ENCODE measurements at regions of chr6 and their contacts with region 1.

Region 1: DNA sequence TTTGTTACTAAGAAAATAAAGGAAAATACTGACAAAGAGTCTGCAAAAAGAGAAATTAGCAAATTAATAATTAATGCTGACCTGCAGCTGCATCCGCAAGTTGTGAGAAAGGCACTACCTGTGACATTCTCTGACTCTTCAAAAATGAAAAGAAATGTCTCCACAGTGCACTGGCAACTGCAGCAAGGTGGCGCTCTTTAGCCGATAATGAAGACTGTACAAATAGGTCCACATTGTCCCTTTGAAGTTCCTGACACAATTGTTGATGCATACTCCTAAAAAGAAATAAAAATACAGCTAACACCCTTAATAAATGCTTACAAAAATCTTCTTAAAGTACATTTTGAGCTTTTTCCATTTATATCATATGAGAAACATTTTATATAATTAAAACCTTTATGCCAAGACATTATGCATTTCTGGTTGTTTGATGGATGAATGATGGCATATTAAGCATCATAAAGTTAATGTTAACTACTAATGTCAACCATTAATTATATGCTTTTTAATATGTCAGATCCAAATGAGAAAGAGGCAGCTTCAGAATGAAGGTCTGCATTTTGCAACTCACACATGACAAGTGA is 96.5 kb downstream of the MMS22L start:
- DNase-seq: peak; percentile 38 to 77 (median 48)
- ATAC-seq: peak; percentile 96
- H3K4me3 ChIP-seq: no peak overlapping the region
- H3K27ac ChIP-seq: no peak overlapping the region
- H3K4me1 ChIP-seq: no peaks in the 10 kb centered on the region
- H3K27me3 ChIP-seq: no peaks in the 10 kb centered on the region
- CTCF ChIP-seq: peak; percentile 68 to 88 (median 83)
- EP300 ChIP-seq: no peak
- POLR2A ChIP-seq: no peak
- RAD21 ChIP-seq: peak; percentile 76 to 79

Region 2: DNA sequence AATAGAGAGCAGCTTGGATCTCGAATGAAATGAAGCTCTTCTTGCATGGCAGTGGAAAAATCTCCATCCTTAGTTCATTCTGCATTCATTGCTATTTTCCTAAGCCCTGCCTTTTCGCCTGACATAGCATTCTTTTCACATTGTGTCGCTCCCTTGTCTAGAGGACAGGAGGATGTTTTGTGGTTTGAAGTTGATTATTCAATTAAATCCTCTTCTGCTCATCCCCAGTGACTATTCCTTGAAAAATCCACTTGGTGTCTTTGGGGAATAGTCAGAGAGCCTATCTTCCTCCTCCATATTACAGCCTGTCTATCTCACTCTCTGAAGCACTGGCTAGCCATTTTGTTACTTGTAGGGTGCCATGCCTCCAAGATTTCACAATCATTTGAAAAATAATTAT is 100.7 kb before region 1 on chr6:
- CTCF ChIA-PET with region 1: no interaction called
- POLR2A ChIA-PET with region 1: no interaction called
- in situ Hi-C with region 1: no loop called
- intact Hi-C with region 1: no loop called
- DNase-seq: no peak
- ATAC-seq: no peak
- H3K4me3 ChIP-seq: no peak overlapping the region
- H3K27ac ChIP-seq: no peak overlapping the region
- H3K4me1 ChIP-seq: no peaks in the 10 kb centered on the region
- H3K27me3 ChIP-seq: peaks cover 0 to 6% of the 10 kb centered on the region in 2 experiments; a peak in 1 of 5 replicates
- CTCF ChIP-seq: no peak
- EP300 ChIP-seq: no peak
- POLR2A ChIP-seq: no peak
- RAD21 ChIP-seq: no peak

Region 3: DNA sequence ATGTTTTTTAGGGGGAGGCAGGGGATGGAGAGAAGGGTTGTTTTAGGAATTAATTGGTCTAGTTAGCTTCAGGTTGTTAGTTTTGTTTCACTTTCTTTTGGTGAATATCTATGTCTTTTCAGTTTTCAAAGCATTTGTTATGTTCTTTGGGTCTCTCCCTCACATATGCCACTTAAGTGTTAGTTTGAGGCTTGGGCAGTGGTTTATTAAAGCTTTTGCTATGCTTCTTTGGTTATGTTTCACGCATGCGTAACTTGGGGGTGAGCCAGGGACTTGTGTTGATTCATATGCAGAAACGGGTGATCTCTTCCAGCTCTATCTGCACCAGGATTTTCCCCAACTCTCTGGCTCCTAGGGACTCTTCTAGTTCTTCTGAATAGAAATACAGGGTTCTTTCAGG is 107.9 kb after region 1 on chr6:
- CTCF ChIA-PET with region 1: no interaction called
- POLR2A ChIA-PET with region 1: no interaction called
- in situ Hi-C with region 1: no loop called
- intact Hi-C with region 1: no loop called
- DNase-seq: no peak
- ATAC-seq: no peak
- H3K4me3 ChIP-seq: no peak overlapping the region
- H3K27ac ChIP-seq: no peak overlapping the region
- H3K4me1 ChIP-seq: no peaks in the 10 kb centered on the region
- H3K27me3 ChIP-seq: no peaks in the 10 kb centered on the region; a peak in 3 of 5 replicates
- CTCF ChIP-seq: no peak
- EP300 ChIP-seq: no peak
- POLR2A ChIP-seq: no peak
- RAD21 ChIP-seq: no peak

Region 4: DNA sequence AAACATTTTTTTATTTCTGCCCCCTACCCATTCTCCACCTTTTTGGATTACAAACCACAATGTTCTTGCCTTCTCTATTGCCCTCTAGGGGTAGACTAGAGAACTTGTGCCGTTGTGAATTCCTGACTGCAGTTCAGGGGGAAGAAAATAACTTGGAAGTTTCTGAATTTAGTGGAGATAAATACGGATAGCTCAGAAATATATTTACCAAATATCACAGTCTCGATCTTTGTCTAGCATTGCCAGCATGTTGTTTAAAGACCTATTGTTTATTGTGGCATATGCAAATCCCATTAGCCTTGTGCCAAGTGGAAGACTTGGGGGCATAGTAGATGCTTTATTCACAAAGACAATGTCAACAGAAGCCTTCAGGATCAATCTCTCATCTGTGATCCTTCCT is 250.6 kb after region 1 on chr6:
- CTCF ChIA-PET with region 1: no interaction called
- POLR2A ChIA-PET with region 1: no interaction called
- in situ Hi-C with region 1: no loop called
- intact Hi-C with region 1: loop called (anchors 2 kb)
- DNase-seq: peak; percentile 11 to 20 (median 16)
- ATAC-seq: peak; percentile 78
- H3K4me3 ChIP-seq: no peak overlapping the region
- H3K27ac ChIP-seq: no peak overlapping the region
- H3K4me1 ChIP-seq: no peaks in the 10 kb centered on the region
- H3K27me3 ChIP-seq: no peaks in the 10 kb centered on the region
- CTCF ChIP-seq: peak; percentile 48 to 56 (median 52); a peak in 4 of 6 replicates
- EP300 ChIP-seq: no peak
- POLR2A ChIP-seq: no peak
- RAD21 ChIP-seq: peak; percentile 13 to 39; a peak in 3 of 4 replicates

Measured in K562 (cell line).